ENCODE measurements at regions of chr5 and their contacts with region 1.

Region 1: DNA sequence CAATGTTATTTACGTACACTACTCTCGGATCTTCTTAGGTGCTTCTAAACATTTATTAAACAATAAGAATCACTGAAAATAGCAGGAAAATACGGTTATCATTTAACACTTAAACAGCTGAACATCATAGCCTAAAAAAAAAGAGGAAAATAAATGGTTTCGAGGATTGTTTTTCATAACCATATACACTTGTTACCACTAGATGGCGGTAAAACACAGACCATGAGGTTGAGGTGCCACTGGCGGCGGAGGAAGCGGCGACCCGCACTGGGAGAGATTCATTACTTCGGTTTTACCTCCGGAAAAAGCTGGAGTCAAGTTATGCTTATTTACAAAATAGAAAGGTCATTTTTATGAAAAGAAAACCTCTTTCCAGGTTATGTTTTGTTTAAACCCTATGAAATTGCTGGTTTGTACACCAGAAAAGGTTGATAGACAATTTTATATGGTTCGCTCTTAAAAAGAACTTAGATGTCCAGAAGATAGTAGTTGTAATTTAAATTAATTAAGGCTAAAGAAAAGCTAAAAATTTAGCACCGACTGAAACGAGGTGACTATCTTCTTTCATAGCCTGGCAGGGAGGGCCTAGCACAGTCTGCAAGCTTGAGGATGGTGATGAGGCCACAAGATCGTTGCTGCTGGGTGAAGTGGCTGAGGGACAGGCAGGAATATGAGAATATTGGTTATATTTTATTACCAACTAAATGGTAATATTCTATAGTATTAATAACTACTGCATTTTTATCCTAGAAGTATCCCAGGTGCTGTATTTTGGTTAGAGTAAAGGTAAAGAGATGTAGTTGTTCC is 605.7 kb downstream of the RAB3C start:
- DNase-seq: peak; percentile 66 to 77 (median 67)
- ATAC-seq: peak; percentile 94
- H3K4me3 ChIP-seq: no peak overlapping the region
- H3K4me1 ChIP-seq: no peaks in the 10 kb centered on the region
- CTCF ChIP-seq: peak; percentile 45

Region 2: GRCh38 chr5:59380350-59380951 is 191.8 kb after region 1 on chr5:
- intact Hi-C with region 1: loop called (anchors 5 to 10 kb)
- DNase-seq: no peak
- ATAC-seq: peak; percentile 70
- H3K4me3 ChIP-seq: no peak overlapping the region
- H3K4me1 ChIP-seq: no peaks in the 10 kb centered on the region
- CTCF ChIP-seq: no peak

Measured in mucosa of descending colon (tissue), 3 donors.